IMR-90 (cell line): ENCODE measurements at regions of chr18 and their contacts with region 1.

Region 1: GRCh38 chr18:55149994-55150393 is 190.7 kb upstream of the CCDC68 start:
- DNase-seq: no peak
- ATAC-seq: no peak
- H3K4me3 ChIP-seq: no peak overlapping the region
- H3K27ac ChIP-seq: no peak overlapping the region
- H3K4me1 ChIP-seq: no peaks in the 10 kb centered on the region
- H3K27me3 ChIP-seq: peaks cover 20% of the 10 kb centered on the region
- CTCF ChIP-seq: no peak
- POLR2A ChIP-seq: no peak
- RAD21 ChIP-seq: no peak

Region 2: GRCh38 chr18:55110436-55110835 is 39.6 kb before region 1 on chr18:
- CTCF ChIA-PET with region 1: no interaction called
- POLR2A ChIA-PET with region 1: no interaction called
- dilution Hi-C with region 1: no loop called
- in situ Hi-C with region 1: no loop called
- intact Hi-C with region 1: no loop called
- DNase-seq: no peak
- ATAC-seq: no peak
- H3K4me3 ChIP-seq: no peak overlapping the region
- H3K27ac ChIP-seq: no peak overlapping the region
- H3K4me1 ChIP-seq: no peaks in the 10 kb centered on the region
- H3K27me3 ChIP-seq: no peaks in the 10 kb centered on the region; the same call in none of the 2 replicates
- CTCF ChIP-seq: no peak
- POLR2A ChIP-seq: no peak
- RAD21 ChIP-seq: no peak

Region 3: GRCh38 chr18:55136258-55136657 is 13.7 kb before region 1 on chr18:
- CTCF ChIA-PET with region 1: no interaction called
- POLR2A ChIA-PET with region 1: interaction called, 17 read pairs
- dilution Hi-C with region 1: no loop called
- in situ Hi-C with region 1: no loop called
- intact Hi-C with region 1: no loop called
- DNase-seq: no peak
- ATAC-seq: no peak
- H3K4me3 ChIP-seq: no peak overlapping the region
- H3K27ac ChIP-seq: no peak overlapping the region
- H3K4me1 ChIP-seq: peaks cover 3% of the 10 kb centered on the region; the same call in 1 of the 2 replicates
- H3K27me3 ChIP-seq: peaks cover 2% of the 10 kb centered on the region; the same call in 1 of the 2 replicates
- CTCF ChIP-seq: no peak
- POLR2A ChIP-seq: no peak
- RAD21 ChIP-seq: no peak